B cell (primary cell): ENCODE measurements at regions of chr6 and their contacts with region 1.

Region 1: DNA sequence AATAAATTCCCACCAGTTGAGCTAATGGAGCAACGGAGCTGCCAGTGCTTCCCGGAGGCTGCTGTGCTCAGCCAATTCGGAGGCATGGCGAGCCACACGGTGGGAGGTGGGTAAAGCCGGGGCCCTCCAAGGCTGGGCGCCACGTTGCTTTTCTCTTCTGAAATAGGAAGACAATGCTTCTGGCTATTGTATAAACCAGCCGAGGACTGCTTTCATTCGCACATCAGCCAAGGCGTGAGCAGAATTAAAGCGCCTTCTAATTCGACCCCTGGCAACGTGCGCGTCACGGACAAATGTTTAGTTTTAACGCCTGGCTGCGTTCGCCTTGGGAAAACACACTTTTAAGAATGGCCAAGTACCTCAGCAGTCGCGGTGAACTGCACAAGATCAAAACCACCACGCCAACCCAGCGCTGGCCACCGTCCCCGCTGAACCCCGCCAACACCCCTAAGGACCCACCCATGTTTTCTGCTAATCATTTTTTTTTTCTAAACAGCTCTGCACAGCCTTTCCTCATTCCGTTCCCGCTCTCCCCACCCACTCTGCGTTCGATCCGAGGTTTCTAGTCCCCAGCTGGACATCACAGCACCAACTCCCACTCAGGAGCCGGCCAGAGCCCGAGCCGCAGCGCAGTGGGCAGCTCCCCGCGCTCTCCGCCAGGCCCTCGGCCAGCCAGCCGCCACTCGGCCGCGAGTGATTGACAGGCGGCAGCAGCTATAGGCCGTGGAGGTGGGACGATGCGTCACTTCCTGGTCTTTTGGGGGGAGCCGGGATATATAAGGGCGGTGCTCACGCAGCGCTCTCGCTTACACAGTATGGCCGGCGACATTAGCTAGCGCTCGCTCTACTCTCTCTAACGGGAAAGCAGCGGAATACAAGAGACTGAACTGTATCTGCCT is at the start of gene AMD1:
- DNase-seq: peak; percentile 98
- ATAC-seq: peak; percentile 77
- H3K4me3 ChIP-seq: peak within 1 kb of the TSS; percentile 78 to 96 (median 93)
- H3K4me3 Mint-ChIP-seq: peak within 1 kb of the TSS; percentile 100
- H3K27ac ChIP-seq: peak within 1 kb of the TSS; percentile 80 to 88
- H3K27ac Mint-ChIP-seq: peak within 1 kb of the TSS; percentile 100
- H3K4me1 ChIP-seq: peaks cover 30 to 34% of the 10 kb centered on the region in 2 donors
- H3K4me1 Mint-ChIP-seq: peaks cover 40% of the 10 kb centered on the region
- H3K27me3 ChIP-seq: no peaks in the 10 kb centered on the region
- H3K27me3 Mint-ChIP-seq: no peaks in the 10 kb centered on the region
- CTCF ChIP-seq: no peak
- total RNA-seq, gene AMD1: 49.3 and 49.8 TPM in 2 replicates

Region 2: GRCh38 chr6:109690737-109691621 is 1183.3 kb before region 1 on chr6 and contains the starts of genes AK9 and FIG4:
- CTCF ChIA-PET with region 1: no interaction called
- POLR2A ChIA-PET with region 1: interaction called, 4 read pairs
- intact Hi-C with region 1: loop called (anchors 10 kb)
- DNase-seq: peak; percentile 91
- ATAC-seq: peak; percentile 92
- H3K4me3 ChIP-seq: peak within 1 kb of the TSS; percentile 82 to 99 (median 93)
- H3K4me3 Mint-ChIP-seq: peak within 1 kb of the TSS; percentile 90
- H3K27ac ChIP-seq: peak within 1 kb of the TSS; percentile 77 to 93
- H3K27ac Mint-ChIP-seq: peak within 1 kb of the TSS; percentile 99
- H3K4me1 ChIP-seq: peaks cover 26 to 29% of the 10 kb centered on the region in 2 donors
- H3K4me1 Mint-ChIP-seq: peaks cover 39% of the 10 kb centered on the region
- H3K27me3 ChIP-seq: no peaks in the 10 kb centered on the region
- H3K27me3 Mint-ChIP-seq: no peaks in the 10 kb centered on the region
- CTCF ChIP-seq: peak; percentile 26
- total RNA-seq, gene AK9: 26.5 and 27.1 TPM in 2 replicates
- total RNA-seq, gene FIG4: 31.5 and 32.8 TPM in 2 replicates

Region 3: DNA sequence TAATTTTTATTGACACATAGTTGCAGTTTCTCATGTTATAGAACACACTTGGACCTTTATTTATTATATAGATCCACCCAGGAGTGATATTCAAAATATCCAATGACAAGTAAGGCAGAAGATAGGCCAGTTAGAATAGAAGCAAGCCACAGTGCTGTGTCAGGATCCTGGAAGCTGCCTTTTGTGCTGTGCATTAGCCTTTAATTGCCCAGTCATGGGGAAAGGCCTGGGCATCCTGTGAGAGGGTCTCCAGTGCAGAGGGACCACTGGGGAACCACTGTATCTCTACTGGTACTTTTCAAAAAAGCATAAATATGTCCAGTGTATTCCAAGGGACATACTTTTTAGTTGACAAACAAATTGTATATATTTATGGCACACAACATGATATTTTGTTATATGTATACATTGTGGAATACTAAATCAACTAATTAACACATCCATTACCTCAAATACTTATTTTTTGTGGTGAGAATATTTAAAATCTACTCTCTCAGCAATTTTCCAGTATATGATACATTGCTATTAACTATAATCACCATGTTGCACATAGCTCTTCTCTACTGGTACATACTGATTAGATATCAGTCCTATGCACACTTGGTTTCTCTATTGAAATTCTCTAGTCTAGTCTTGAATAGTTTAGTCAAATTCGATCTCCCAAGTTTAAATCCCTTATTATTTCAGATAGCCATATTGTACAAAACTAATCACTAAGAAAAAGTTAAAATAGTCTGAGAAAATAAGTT is 634.5 kb before region 1 on chr6:
- CTCF ChIA-PET with region 1: no interaction called
- POLR2A ChIA-PET with region 1: no interaction called
- intact Hi-C with region 1: no loop called
- DNase-seq: no peak
- ATAC-seq: no peak
- H3K4me3 ChIP-seq: no peak overlapping the region
- H3K4me3 Mint-ChIP-seq: no peak overlapping the region
- H3K27ac ChIP-seq: no peak overlapping the region
- H3K27ac Mint-ChIP-seq: no peak overlapping the region
- H3K4me1 ChIP-seq: no peaks in the 10 kb centered on the region
- H3K4me1 Mint-ChIP-seq: peaks cover 3% of the 10 kb centered on the region
- H3K27me3 ChIP-seq: no peaks in the 10 kb centered on the region
- H3K27me3 Mint-ChIP-seq: no peaks in the 10 kb centered on the region
- CTCF ChIP-seq: no peak

Region 4: GRCh38 chr6:110815217-110816109 is 58.8 kb before region 1 on chr6 and contains the start of gene CDK19:
- CTCF ChIA-PET with region 1: interaction called, 36 read pairs
- POLR2A ChIA-PET with region 1: interaction called, 99 read pairs
- intact Hi-C with region 1: loop called (anchors 1 kb)
- DNase-seq: peak; percentile 99
- ATAC-seq: peak; percentile 76
- H3K4me3 ChIP-seq: peak within 1 kb of the TSS; percentile 83 to 99 (median 93)
- H3K4me3 Mint-ChIP-seq: peak within 1 kb of the TSS; percentile 97
- H3K27ac ChIP-seq: peak within 1 kb of the TSS; percentile 84 to 93
- H3K27ac Mint-ChIP-seq: peak within 1 kb of the TSS; percentile 99
- H3K4me1 ChIP-seq: peaks cover 33 to 34% of the 10 kb centered on the region in 2 donors
- H3K4me1 Mint-ChIP-seq: peaks cover 39% of the 10 kb centered on the region
- H3K27me3 ChIP-seq: no peaks in the 10 kb centered on the region
- H3K27me3 Mint-ChIP-seq: no peaks in the 10 kb centered on the region
- CTCF ChIP-seq: no peak
- total RNA-seq, gene CDK19: 44.8 and 45.3 TPM in 2 replicates

Region 5: DNA sequence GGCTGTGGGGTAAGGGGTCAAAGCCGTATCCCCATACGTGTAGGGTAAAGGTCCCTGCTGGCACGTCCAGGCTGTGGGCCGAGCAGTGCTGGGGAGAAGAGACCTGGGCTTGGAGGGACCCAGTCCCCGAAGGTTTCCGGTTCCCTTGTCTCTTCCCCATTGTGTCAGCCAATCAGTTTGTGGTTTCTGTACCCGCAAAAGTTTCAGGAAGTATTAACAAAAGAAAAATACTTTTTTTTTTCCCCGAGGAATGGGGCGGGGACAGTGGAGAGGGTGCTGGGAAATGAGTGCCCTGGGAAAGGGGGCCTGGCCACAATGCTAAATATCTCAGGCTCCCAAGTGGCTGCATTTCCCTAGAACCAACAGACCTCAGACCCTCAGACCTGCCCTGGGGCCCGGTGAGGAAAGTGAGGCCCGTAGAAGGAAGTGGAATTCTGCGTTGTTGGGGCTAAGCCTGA is 14.9 kb before region 1 on chr6:
- CTCF ChIA-PET with region 1: interaction called, 3 read pairs
- POLR2A ChIA-PET with region 1: interaction called, 5 read pairs
- intact Hi-C with region 1: loop called (anchors 2 kb)
- DNase-seq: peak; percentile 51
- ATAC-seq: peak; percentile 60
- H3K4me3 ChIP-seq: peak overlapping the region; percentile 29 to 51 (median 41)
- H3K4me3 Mint-ChIP-seq: peak overlapping the region; percentile 40
- H3K27ac ChIP-seq: peak overlapping the region; percentile 4 to 58
- H3K27ac Mint-ChIP-seq: peak overlapping the region; percentile 80
- H3K4me1 ChIP-seq: peaks cover 11 to 14% of the 10 kb centered on the region in 2 donors
- H3K4me1 Mint-ChIP-seq: peaks cover 12% of the 10 kb centered on the region
- H3K27me3 ChIP-seq: no peaks in the 10 kb centered on the region
- H3K27me3 Mint-ChIP-seq: no peaks in the 10 kb centered on the region
- CTCF ChIP-seq: no peak

Region 6: GRCh38 chr6:110902091-110902490 is 27.9 kb after region 1 on chr6:
- CTCF ChIA-PET with region 1: no interaction called
- POLR2A ChIA-PET with region 1: no interaction called
- intact Hi-C with region 1: no loop called
- DNase-seq: no peak
- ATAC-seq: no peak
- H3K4me3 ChIP-seq: no peak overlapping the region
- H3K4me3 Mint-ChIP-seq: no peak overlapping the region
- H3K27ac ChIP-seq: no peak overlapping the region
- H3K27ac Mint-ChIP-seq: no peak overlapping the region
- H3K4me1 ChIP-seq: no peaks in the 10 kb centered on the region
- H3K4me1 Mint-ChIP-seq: no peaks in the 10 kb centered on the region
- H3K27me3 ChIP-seq: no peaks in the 10 kb centered on the region
- H3K27me3 Mint-ChIP-seq: peaks cover 3% of the 10 kb centered on the region
- CTCF ChIP-seq: no peak

Region 7: DNA sequence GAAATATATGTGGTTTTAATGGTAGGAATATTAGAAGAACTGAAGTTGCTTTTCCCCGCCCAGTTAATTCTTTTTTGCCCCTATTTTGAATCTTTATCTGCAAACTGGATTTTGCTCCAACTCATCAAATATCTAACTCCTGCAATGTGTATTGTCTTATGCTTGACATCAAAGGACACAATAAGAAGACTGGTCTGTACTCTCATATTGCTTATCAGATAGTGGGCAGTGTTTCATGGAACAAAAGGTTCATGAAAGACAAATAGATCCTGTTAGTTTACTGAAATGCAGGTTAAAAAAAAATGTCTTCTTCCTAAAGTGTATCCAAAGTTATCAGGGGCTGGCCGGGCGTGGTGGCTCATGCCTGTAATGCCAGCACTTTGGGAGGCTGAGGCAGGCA is 56.6 kb after region 1 on chr6:
- CTCF ChIA-PET with region 1: no interaction called
- POLR2A ChIA-PET with region 1: no interaction called
- intact Hi-C with region 1: no loop called
- DNase-seq: no peak
- ATAC-seq: no peak
- H3K4me3 ChIP-seq: no peak overlapping the region
- H3K4me3 Mint-ChIP-seq: no peak overlapping the region
- H3K27ac ChIP-seq: no peak overlapping the region
- H3K27ac Mint-ChIP-seq: no peak overlapping the region
- H3K4me1 ChIP-seq: peaks cover 6 to 9% of the 10 kb centered on the region in 2 donors
- H3K4me1 Mint-ChIP-seq: peaks cover 9% of the 10 kb centered on the region
- H3K27me3 ChIP-seq: no peaks in the 10 kb centered on the region
- H3K27me3 Mint-ChIP-seq: no peaks in the 10 kb centered on the region
- CTCF ChIP-seq: no peak

Region 8: GRCh38 chr6:110981202-110981600 is 107.0 kb after region 1 on chr6:
- CTCF ChIA-PET with region 1: interaction called, 3 read pairs
- POLR2A ChIA-PET with region 1: interaction called, 4 read pairs
- intact Hi-C with region 1: loop called (anchors 1 kb)
- DNase-seq: peak; percentile 43
- ATAC-seq: no peak
- H3K4me3 ChIP-seq: peak overlapping the region; percentile 73 to 98 (median 87)
- H3K4me3 Mint-ChIP-seq: peak overlapping the region; percentile 98
- H3K27ac ChIP-seq: peak overlapping the region; percentile 77 to 93
- H3K27ac Mint-ChIP-seq: peak overlapping the region; percentile 99
- H3K4me1 ChIP-seq: peaks cover 13 to 18% of the 10 kb centered on the region in 2 donors
- H3K4me1 Mint-ChIP-seq: peaks cover 34% of the 10 kb centered on the region
- H3K27me3 ChIP-seq: no peaks in the 10 kb centered on the region
- H3K27me3 Mint-ChIP-seq: no peaks in the 10 kb centered on the region
- CTCF ChIP-seq: no peak

Region 9: DNA sequence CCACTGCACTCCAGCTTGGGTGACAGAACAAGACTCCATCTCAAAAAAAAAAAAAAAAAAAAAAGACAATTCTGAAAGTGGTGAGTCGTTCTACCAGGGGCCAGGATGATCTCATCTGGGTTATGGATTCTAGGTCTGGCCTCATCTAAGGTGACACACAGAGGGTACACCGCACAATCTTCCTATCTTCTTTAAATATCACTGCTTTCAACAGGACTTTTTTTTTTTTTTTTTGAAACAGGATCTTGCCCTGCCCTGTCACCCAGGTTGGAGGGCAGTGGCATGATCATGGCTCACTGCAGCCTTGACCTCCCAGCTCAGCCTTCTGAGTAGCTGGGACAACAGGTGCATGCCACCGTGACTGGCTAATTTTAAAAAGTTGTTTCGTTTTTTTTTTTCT is 280.8 kb after region 1 on chr6:
- CTCF ChIA-PET with region 1: no interaction called
- POLR2A ChIA-PET with region 1: no interaction called
- intact Hi-C with region 1: no loop called
- DNase-seq: no peak
- ATAC-seq: no peak
- H3K4me3 ChIP-seq: no peak overlapping the region
- H3K4me3 Mint-ChIP-seq: no peak overlapping the region
- H3K27ac ChIP-seq: no peak overlapping the region
- H3K27ac Mint-ChIP-seq: no peak overlapping the region
- H3K4me1 ChIP-seq: no peaks in the 10 kb centered on the region
- H3K4me1 Mint-ChIP-seq: no peaks in the 10 kb centered on the region
- H3K27me3 ChIP-seq: no peaks in the 10 kb centered on the region
- H3K27me3 Mint-ChIP-seq: peaks cover 9% of the 10 kb centered on the region
- CTCF ChIP-seq: no peak

Region 10: GRCh38 chr6:111873178-111874024 is 999.2 kb after region 1 on chr6 and contains the start of gene FYN:
- CTCF ChIA-PET with region 1: no interaction called
- POLR2A ChIA-PET with region 1: no interaction called
- intact Hi-C with region 1: loop called (anchors 10 kb)
- DNase-seq: peak; percentile 98
- ATAC-seq: peak; percentile 94
- H3K4me3 ChIP-seq: peak within 1 kb of the TSS; percentile 61 to 89 (median 81)
- H3K4me3 Mint-ChIP-seq: peak within 1 kb of the TSS; percentile 99
- H3K27ac ChIP-seq: peak within 1 kb of the TSS; percentile 66 to 76
- H3K27ac Mint-ChIP-seq: peak within 1 kb of the TSS; percentile 94
- H3K4me1 ChIP-seq: peaks cover 26 to 36% of the 10 kb centered on the region in 2 donors
- H3K4me1 Mint-ChIP-seq: peaks cover 38% of the 10 kb centered on the region
- H3K27me3 ChIP-seq: no peaks in the 10 kb centered on the region
- H3K27me3 Mint-ChIP-seq: no peaks in the 10 kb centered on the region
- CTCF ChIP-seq: no peak
- total RNA-seq, gene FYN: 92.4 and 94.0 TPM in 2 replicates